A549 (cell line): ENCODE measurements at regions of chr9 and their contacts with region 1.

Region 1: DNA sequence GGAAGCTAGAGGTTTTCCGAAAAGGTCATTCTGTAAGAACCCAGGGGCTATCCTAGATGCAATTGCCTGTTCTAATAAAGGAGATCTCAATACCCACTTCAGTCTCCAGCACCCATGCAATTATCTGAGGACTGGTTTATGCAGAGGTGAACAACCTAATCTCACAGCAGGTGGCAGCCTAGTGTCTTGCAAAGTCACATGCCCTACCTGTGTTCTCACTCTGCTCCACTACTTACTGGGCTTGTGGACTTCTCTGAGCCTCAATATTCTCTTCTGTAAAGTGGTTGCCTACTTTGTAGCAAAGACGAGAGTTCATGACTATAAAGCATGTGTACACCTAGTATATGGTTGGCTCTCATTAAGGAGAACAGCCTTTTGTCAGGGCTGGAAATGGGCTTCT is 21.0 kb upstream of the ALDH1B1 start:
- DNase-seq: peak; percentile 64 to 71
- ATAC-seq: peak; percentile 94
- H3K4me3 ChIP-seq: no peak overlapping the region
- H3K27ac ChIP-seq: no peak overlapping the region
- H3K4me1 ChIP-seq: no peaks in the 10 kb centered on the region
- CTCF ChIP-seq: peak; percentile 65
- EP300 ChIP-seq: no peak
- POLR2A ChIP-seq: no peak
- RAD21 ChIP-seq: peak; percentile 77 to 81

Region 2: DNA sequence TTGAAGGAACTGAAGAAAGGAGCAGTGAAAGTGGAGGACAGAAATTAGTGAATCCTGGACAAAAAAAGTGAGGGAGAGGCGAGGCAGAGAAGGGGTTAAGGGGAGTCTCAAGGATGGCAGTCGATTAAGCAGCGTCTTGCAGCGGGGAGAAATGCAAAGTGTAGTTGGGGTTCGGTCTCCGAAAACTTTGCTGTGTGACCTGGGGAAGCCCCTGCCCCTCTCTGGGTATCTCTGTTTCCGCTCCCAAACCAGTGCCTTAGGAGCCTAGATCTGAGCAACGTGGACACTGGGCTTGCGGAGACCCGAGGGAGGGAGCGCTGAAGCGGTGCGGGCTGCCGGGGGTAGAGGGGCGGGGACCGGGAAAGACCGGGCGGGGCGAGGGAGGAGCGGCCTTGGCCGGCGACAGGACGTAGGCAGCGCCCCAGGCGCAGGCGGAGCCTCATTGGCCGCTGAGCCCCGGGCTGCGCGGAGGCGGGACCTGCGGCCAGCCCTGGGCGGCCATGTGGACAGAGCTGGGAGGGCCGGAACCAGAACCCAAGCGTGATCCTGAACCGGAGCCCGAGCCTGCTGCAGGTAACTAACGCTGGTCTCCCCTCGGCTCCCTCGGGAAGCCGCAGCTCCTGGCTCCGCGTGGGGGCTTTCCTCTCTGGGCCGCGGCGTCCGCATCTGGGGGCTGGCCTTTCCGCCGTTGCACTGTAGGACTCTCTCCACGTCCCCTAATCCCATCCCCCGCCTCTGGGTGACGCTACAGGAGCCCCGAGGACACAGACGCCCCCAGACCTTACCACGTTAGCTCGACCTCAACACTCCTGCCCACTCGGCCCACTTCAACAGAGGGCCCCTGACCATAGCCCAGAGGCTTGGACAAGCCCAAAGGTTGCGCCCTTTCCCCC is 21.0 kb after region 1 on chr9 and contains the start of gene ALDH1B1:
- CTCF ChIA-PET with region 1: interaction called, 12 read pairs
- POLR2A ChIA-PET with region 1: no interaction called
- DNase-seq: peak; percentile 86 to 97
- ATAC-seq: peak; percentile 98 to 100
- H3K4me3 ChIP-seq: peak within 1 kb of the TSS; percentile 66
- H3K27ac ChIP-seq: peak within 1 kb of the TSS; percentile 86 to 96
- H3K4me1 ChIP-seq: peaks cover 14% of the 10 kb centered on the region; the same call in 1 of the 3 replicates
- CTCF ChIP-seq: peak; percentile 32; the same call in 2 of the 3 replicates
- EP300 ChIP-seq: no peak
- POLR2A ChIP-seq: peak; percentile 71
- RAD21 ChIP-seq: peak in 1 of 2 experiments; percentile 14; a peak in 1 of 5 replicates
- polyA plus RNA-seq, gene ALDH1B1: 39.7 and 40.2 TPM in 2 replicates